Colonic mucosa (tissue), 4 donors: ENCODE measurements at regions of chr6 and their contacts with region 1.

Region 1: GRCh38 chr6:53492860-53493634 is 51.9 kb downstream of the GCLC start:
- DNase-seq: no peak
- H3K4me3 ChIP-seq: no peak overlapping the region
- H3K27ac ChIP-seq: no peak overlapping the region
- H3K4me1 ChIP-seq: no peaks in the 10 kb centered on the region
- H3K27me3 ChIP-seq: no peaks in the 10 kb centered on the region
- CTCF ChIP-seq: peak; percentile 73

Region 2: DNA sequence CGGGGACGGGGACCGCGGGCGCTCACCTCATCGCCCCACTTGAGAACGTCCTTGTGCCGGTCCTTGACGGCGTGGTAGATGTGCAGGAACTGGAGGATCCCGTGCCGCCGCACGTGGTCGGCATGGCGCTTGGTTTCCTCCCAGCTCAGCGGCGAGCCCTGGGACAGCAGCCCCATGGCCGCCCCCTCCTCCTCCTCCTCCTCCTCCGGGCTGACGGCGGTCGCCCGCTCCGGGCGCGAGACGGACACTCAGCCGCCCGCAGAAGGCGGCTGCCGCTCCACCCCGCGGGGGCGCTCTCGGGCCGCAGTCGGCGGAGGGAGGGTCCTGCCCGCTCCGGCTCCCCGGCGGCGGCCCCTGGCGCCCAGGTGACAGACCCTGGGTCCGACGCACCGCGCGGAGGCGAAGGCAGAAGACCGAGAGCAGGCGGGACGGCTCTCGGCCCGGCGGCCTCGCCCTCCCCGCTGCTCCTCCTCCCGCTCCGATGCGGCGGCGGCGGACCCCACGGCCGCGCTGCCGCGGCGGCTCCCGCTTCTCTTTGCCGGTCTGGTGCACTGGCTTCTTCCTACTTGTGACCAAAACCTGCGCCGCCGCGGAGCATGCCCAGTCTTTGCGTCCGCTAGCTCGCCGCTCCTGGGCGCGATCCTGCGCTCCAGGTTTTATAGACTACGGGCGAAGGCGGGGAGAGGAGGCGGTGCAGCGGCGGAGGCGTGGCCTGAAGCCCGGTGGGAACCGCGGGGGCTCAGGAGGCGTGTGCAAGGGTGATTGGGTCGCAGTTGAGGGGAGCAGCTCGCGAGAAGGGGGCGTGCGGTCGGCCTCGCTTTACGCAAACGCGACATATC is 51.6 kb after region 1 on chr6 and contains the start of gene GCLC:
- intact Hi-C with region 1: loop called (anchors 5 kb)
- DNase-seq: peak; percentile 95
- H3K4me3 ChIP-seq: peak within 1 kb of the TSS; percentile 77
- H3K27ac ChIP-seq: peak within 1 kb of the TSS; percentile 95
- H3K4me1 ChIP-seq: peaks cover 6% of the 10 kb centered on the region
- H3K27me3 ChIP-seq: no peaks in the 10 kb centered on the region
- CTCF ChIP-seq: peak; percentile 61
- total RNA-seq, gene GCLC: 35.0 to 37.1 TPM

Region 3: GRCh38 chr6:53651764-53652401 is 158.8 kb after region 1 on chr6:
- intact Hi-C with region 1: loop called (anchors 5 kb)
- DNase-seq: peak; percentile 86
- H3K4me3 ChIP-seq: peak overlapping the region; percentile 71
- H3K27ac ChIP-seq: peak overlapping the region; percentile 71
- H3K4me1 ChIP-seq: no peaks in the 10 kb centered on the region
- H3K27me3 ChIP-seq: no peaks in the 10 kb centered on the region
- CTCF ChIP-seq: peak; percentile 32

Region 4: DNA sequence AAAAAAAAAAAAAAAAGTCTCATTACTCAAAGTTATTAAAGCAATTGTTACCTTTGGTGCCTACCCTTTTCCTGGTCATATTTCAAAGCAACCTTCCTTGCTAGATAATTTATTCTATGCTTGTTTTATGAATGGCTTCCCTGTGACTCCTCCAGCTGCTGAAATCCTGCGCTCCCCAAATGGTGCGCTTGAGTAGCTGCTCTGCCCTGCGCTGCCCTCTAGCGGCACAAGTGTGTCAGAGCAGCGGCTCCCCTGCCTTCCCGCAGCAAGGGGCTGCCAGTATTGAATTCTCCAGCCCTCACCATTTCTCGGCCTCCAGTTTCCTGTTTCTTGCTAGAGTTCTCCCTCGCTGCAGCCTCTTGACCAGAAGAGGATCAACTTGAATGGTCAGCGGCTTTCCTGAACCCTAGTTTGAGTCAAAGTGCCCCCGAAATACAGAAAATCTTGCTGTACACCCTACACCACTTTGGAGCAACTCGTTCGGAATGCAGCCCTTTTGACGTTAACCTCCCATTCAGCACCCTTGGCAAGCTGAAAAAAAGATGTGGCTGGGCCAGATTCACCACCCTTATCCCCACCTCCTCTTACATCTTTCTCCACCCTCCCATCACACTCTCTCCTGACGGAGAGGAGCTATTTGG is 232.9 kb after region 1 on chr6:
- intact Hi-C with region 1: loop called (anchors 2 kb)
- DNase-seq: peak; percentile 76
- H3K4me3 ChIP-seq: no peak overlapping the region
- H3K27ac ChIP-seq: no peak overlapping the region
- H3K4me1 ChIP-seq: no peaks in the 10 kb centered on the region
- H3K27me3 ChIP-seq: no peaks in the 10 kb centered on the region
- CTCF ChIP-seq: peak; percentile 98

Region 5: GRCh38 chr6:53956068-53956711 is 463.1 kb after region 1 on chr6:
- intact Hi-C with region 1: loop called (anchors 10 kb)
- DNase-seq: peak; percentile 77
- H3K4me3 ChIP-seq: no peak overlapping the region
- H3K27ac ChIP-seq: no peak overlapping the region
- H3K4me1 ChIP-seq: no peaks in the 10 kb centered on the region
- H3K27me3 ChIP-seq: no peaks in the 10 kb centered on the region
- CTCF ChIP-seq: peak; percentile 68